Activated CD8-positive, alpha-beta memory T cell treated with anti-CD3 and anti-CD28 coated beads, Interleukin-2, amount 10 ng/mL, durations not matched to agents 7 days and 5 days (primary cell): ENCODE measurements at regions of chr9 and their contacts with region 1.

Region 1: DNA sequence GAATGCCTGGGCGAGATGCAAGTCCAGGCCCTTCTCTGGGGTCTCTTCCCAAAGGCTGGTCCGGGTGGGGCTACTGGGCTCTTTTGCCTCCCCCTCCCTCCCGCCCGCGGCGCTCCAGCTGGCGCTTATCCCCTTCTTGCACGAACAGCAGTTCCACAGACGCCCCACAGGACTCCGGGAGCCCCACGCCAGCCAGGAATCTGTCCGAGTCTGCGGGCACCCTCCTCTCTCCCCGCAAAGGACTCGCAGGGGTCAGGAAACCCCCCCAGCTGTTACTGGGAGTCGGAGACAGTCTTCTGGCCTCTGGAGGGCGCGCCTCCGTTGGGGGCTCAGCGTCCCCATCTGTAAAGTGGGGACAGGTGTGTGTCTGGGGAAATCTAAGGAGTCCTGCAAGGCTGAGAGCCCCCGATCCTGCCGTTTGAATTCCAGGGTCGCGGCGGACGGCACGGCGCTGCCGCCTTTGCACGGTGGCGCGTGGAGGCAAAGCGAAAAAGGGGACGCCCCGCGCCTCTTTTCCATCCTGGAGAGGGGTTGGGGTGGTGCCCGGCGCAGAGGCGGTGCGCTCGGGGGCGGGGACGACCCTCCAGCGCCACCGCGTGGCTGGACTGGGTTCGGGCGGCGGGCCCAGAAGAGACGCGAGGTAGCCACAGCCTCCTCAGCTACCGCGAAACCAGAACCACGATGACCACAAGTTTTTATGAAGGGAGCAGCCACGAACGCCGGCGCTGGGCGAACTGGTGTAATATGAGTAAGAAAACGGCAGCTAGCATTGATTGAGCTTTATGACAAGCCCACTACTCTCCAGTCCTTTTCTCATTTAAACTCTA is 2.9 kb upstream of the CCIN start:
- DNase-seq: peak; percentile 88
- ATAC-seq: peak; percentile 98
- H3K4me3 Mint-ChIP-seq: peak overlapping the region; percentile 64
- H3K27ac Mint-ChIP-seq: peak overlapping the region; percentile 46
- H3K4me1 Mint-ChIP-seq: peaks cover 7% of the 10 kb centered on the region
- H3K27me3 Mint-ChIP-seq: peaks cover 25% of the 10 kb centered on the region

Region 2: DNA sequence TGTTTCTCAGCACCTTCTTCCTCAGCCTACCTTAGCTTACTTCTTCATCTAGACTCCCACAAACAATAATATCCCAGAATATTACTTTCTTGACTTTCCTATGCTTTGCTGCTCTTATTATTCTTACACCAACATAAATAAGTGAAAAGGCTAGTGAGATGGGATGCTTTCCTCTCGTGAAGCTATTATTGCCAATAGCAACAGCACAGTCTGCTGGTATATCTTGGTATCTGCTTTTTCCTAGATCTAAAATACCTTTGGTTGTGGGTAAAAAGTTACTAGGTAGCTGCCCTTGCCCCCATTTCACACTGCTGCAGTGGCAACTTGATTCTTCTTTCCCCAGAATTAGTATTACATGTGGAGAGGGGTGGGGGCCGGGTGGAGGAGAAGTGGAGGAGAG is 55.9 kb before region 1 on chr9:
- CTCF ChIA-PET with region 1: interaction called, 295 read pairs
- DNase-seq: no peak
- ATAC-seq: no peak
- H3K4me3 Mint-ChIP-seq: no peak overlapping the region
- H3K27ac Mint-ChIP-seq: no peak overlapping the region
- H3K4me1 Mint-ChIP-seq: no peaks in the 10 kb centered on the region
- H3K27me3 Mint-ChIP-seq: no peaks in the 10 kb centered on the region

Region 3: GRCh38 chr9:36136272-36136893 is 29.9 kb before region 1 on chr9 and contains the start of gene GLIPR2:
- CTCF ChIA-PET with region 1: interaction called, 21 read pairs
- DNase-seq: peak; percentile 85
- ATAC-seq: peak; percentile 99
- H3K4me3 Mint-ChIP-seq: peak within 1 kb of the TSS; percentile 99
- H3K27ac Mint-ChIP-seq: peak within 1 kb of the TSS; percentile 66
- H3K4me1 Mint-ChIP-seq: peaks cover 46% of the 10 kb centered on the region
- H3K27me3 Mint-ChIP-seq: peaks cover 19% of the 10 kb centered on the region
- total RNA-seq, gene GLIPR2: 28.4 to 49.8 TPM

Region 4: GRCh38 chr9:36154331-36154952 is 11.9 kb before region 1 on chr9:
- CTCF ChIA-PET with region 1: interaction called, 33 read pairs
- DNase-seq: no peak
- ATAC-seq: no peak
- H3K4me3 Mint-ChIP-seq: no peak overlapping the region
- H3K27ac Mint-ChIP-seq: no peak overlapping the region
- H3K4me1 Mint-ChIP-seq: peaks cover 45% of the 10 kb centered on the region
- H3K27me3 Mint-ChIP-seq: no peaks in the 10 kb centered on the region

Region 5: DNA sequence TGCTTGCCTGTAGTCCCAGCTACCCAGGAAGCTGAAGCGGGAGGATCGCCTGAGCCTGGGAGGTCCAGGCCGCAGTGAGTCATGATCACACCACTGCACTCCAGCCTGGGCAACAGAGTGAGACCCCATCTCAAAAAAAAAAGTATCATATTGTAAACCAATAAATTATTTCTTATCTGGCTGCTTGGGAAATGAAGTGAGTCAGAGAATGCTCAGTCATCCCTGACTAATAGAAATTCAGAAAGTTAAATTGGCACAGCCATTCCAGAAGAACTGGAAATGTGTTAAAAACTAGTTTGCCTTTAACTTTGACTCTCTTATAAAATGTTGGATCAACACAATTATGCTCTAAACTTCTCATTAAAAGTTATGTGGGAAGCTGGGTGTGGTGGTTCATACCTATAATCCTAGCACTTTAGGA is 101.7 kb after region 1 on chr9:
- CTCF ChIA-PET with region 1: no interaction called
- DNase-seq: no peak
- ATAC-seq: no peak
- H3K4me3 Mint-ChIP-seq: no peak overlapping the region
- H3K27ac Mint-ChIP-seq: no peak overlapping the region
- H3K4me1 Mint-ChIP-seq: no peaks in the 10 kb centered on the region
- H3K27me3 Mint-ChIP-seq: no peaks in the 10 kb centered on the region